Posterior cingulate gyrus (tissue), 11 donors: ENCODE measurements at regions of chr17 and their contacts with region 1.

Region 1: GRCh38 chr17:44533533-44534246 is 23.6 kb upstream of the FZD2 start:
- DNase-seq: peak; percentile 45 to 93 (median 79)

Region 2: GRCh38 chr17:44587339-44587738 is 53.6 kb after region 1 on chr17:
- intact Hi-C with region 1: no loop called
- DNase-seq: peak in 1 of 10 donors; percentile 12

Region 3: DNA sequence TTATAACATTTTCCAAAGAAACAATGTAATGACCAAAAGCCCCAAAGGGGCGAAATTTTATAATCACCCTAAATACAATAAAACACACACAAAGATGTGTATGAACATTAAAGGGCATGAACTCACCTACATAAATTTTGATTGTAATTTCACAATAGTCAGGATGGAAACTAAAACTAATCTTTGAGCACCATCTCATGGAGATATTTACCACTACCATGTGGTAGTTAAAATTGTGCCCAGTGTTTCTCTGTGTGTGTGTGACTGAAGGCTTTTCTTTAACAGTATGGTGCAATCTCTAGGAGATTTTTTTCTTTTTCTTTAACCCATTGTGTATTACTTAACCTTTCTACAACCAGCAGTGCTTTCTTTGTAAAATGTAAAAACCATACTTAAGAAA is 102.9 kb after region 1 on chr17:
- intact Hi-C with region 1: loop called (anchors 1 kb)
- DNase-seq: peak in 1 of 10 donors; percentile 4

Region 4: GRCh38 chr17:45131616-45132319 is 598.1 kb after region 1 on chr17:
- intact Hi-C with region 1: no loop called
- DNase-seq: peak in 4 of 10 donors; percentile 31 to 57 (median 34)